ENCODE measurements at regions of chr2 and their contacts with region 1.

Region 1: GRCh38 chr2:54899576-54900200 is 150.6 kb downstream of the RTN4 start:
- DNase-seq: no peak
- H3K4me3 ChIP-seq: no peak overlapping the region
- H3K27ac ChIP-seq: no peak overlapping the region
- H3K4me1 ChIP-seq: no peaks in the 10 kb centered on the region
- H3K27me3 ChIP-seq: no peaks in the 10 kb centered on the region
- CTCF ChIP-seq: peak; percentile 38 to 65 (median 48)

Region 2: DNA sequence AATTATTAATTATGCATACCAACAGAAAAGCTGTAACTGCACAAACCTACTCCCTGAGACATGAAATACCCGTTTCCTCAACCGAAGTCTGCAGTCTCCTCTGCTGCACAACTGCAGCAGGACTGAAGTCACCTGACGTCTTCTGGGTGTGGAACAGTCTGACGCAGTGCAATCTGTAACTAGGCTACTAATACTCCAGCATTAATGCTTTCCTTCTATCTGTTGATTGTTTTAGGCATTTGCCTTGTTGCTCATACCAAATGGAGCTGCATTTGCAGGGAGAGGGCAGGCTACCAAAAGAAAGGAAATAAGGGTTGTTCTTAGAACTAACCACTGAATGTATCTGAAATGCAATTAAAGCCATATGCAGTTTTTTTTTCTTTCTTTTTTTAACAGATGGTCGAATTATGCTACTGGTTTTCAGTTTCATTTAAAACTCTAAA is 110.5 kb after region 1 on chr2:
- intact Hi-C with region 1: loop called (anchors 10 kb)
- DNase-seq: peak in 1 of 2 donors; percentile 35
- H3K4me3 ChIP-seq: peak overlapping the region; percentile 30 to 36
- H3K27ac ChIP-seq: peak overlapping the region in 1 of 2 donors; percentile 37
- H3K4me1 ChIP-seq: peaks cover 2 to 78% of the 10 kb centered on the region in 2 donors
- H3K27me3 ChIP-seq: no peaks in the 10 kb centered on the region
- CTCF ChIP-seq: no peak

Region 3: GRCh38 chr2:55175254-55176025 is 275.8 kb after region 1 on chr2:
- intact Hi-C with region 1: loop called (anchors 2 kb)
- DNase-seq: no peak
- H3K4me3 ChIP-seq: no peak overlapping the region
- H3K27ac ChIP-seq: no peak overlapping the region
- H3K4me1 ChIP-seq: peaks cover 0 to 4% of the 10 kb centered on the region in 2 donors
- H3K27me3 ChIP-seq: no peaks in the 10 kb centered on the region
- CTCF ChIP-seq: peak; percentile 55 to 69 (median 56)